ENCODE measurements at regions of chrX and their contacts with region 1.

Region 1: GRCh38 chrX:40108959-40109287 is 11.2 kb upstream of the BCOR start:
- DNase-seq: no peak
- ATAC-seq: peak; percentile 41
- H3K4me3 ChIP-seq: peak overlapping the region; percentile 39 to 62
- H3K27ac ChIP-seq: peak overlapping the region; percentile 99
- H3K4me1 ChIP-seq: peaks cover 37 to 58% of the 10 kb centered on the region in 2 experiments
- H3K27me3 ChIP-seq: no peaks in the 10 kb centered on the region
- CTCF ChIP-seq: no peak
- POLR2A ChIP-seq: no peak
- RAD21 ChIP-seq: no peak

Region 2: DNA sequence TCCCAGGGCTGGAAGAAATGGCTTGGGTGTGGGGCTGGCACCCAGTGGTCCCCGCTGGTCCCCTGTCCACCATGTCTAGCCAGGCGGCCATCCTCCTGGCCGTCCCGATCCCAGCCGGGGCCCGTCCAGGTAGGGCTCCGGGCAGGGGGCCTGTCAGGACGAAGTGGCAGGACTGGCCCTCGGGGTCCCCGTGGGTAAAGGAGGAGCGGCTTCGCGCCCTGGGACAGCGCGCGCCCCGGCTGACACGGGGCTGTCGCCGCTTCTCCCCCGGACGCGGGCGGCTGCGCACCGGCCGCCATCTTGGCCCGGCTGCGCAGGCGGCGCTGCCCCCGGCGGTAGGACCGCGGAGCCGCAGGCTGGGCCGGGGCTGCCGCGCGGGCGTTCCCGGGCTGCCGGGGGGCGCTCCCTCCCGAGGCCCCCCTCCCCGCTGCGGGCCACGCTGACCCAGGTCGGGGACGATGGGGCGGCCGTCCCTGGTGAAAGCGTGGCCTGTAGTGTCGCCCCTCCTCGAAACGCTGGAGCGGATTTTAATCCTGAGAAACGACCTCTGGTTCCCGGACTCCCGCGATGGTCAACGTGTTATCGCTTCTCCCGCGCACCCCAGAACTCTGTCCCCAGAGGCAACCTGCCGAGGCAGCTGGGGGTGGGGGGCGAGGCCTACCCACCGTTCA is 49.2 kb after region 1 on chrX:
- CTCF ChIA-PET with region 1: no interaction called
- POLR2A ChIA-PET with region 1: no interaction called
- RAD21 ChIA-PET with region 1: no interaction called
- intact Hi-C with region 1: loop called (anchors 5 kb)
- DNase-seq: no peak
- ATAC-seq: peak; percentile 57
- H3K4me3 ChIP-seq: peak overlapping the region; percentile 45 to 59
- H3K27ac ChIP-seq: peak overlapping the region; percentile 87
- H3K4me1 ChIP-seq: peaks cover 24 to 48% of the 10 kb centered on the region in 2 experiments
- H3K27me3 ChIP-seq: no peaks in the 10 kb centered on the region
- CTCF ChIP-seq: no peak; a peak in 1 of 6 replicates
- POLR2A ChIP-seq: no peak
- RAD21 ChIP-seq: no peak

Region 3: GRCh38 chrX:41198406-41198805 is 1089.5 kb after region 1 on chrX:
- CTCF ChIA-PET with region 1: no interaction called
- POLR2A ChIA-PET with region 1: no interaction called
- RAD21 ChIA-PET with region 1: no interaction called
- intact Hi-C with region 1: no loop called
- DNase-seq: no peak
- ATAC-seq: no peak
- H3K4me3 ChIP-seq: no peak overlapping the region
- H3K27ac ChIP-seq: no peak overlapping the region
- H3K4me1 ChIP-seq: no peaks in the 10 kb centered on the region
- H3K27me3 ChIP-seq: no peaks in the 10 kb centered on the region
- CTCF ChIP-seq: no peak
- POLR2A ChIP-seq: no peak
- RAD21 ChIP-seq: no peak

Measured in HCT116 (cell line).